Gastrocnemius medialis (tissue), 4 donors: ENCODE measurements at regions of chr21 and their contacts with region 1.

Region 1: DNA sequence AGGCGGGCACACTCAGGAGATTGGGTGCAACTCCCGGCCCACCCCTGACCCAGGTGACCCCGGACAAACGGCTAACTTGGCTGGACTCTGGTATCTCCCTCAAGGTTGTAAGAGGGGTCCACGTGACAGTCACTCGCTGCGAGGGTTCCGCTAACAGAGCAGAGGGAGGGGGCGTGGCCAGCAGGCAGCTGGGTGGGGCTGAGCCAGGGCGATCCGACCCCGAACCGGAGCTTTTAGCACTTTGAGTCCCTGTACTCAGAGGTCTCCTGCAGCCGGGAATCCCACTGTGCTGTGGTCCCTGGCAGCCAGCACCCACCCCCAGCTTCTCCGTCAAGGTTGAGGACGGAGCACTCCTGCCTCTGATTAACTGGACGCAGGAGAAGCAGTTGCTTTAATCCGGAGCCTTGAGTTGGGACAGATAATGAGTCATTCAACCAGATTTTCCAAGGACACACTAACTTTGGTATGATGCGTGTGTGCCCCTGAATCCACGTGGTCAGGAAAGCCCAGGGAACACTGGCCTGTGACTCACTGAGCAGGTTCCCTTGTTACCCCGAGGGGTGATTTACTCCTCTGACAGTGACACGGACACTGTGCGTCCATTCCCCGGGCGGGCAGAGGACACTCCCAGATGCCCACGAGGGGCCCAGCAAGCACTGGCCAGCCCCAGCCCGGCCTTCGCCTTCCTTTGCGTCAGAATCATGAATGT is 16.8 kb downstream of the TRPM2 start:
- DNase-seq: no peak
- ATAC-seq: no peak
- H3K4me3 ChIP-seq: no peak overlapping the region
- H3K27ac ChIP-seq: no peak overlapping the region
- H3K4me1 ChIP-seq: no peaks in the 10 kb centered on the region
- H3K27me3 ChIP-seq: peaks cover 17 to 25% (median 21%) of the 10 kb centered on the region in 3 donors
- CTCF ChIP-seq: no peak
- POLR2A ChIP-seq: no peak

Region 2: DNA sequence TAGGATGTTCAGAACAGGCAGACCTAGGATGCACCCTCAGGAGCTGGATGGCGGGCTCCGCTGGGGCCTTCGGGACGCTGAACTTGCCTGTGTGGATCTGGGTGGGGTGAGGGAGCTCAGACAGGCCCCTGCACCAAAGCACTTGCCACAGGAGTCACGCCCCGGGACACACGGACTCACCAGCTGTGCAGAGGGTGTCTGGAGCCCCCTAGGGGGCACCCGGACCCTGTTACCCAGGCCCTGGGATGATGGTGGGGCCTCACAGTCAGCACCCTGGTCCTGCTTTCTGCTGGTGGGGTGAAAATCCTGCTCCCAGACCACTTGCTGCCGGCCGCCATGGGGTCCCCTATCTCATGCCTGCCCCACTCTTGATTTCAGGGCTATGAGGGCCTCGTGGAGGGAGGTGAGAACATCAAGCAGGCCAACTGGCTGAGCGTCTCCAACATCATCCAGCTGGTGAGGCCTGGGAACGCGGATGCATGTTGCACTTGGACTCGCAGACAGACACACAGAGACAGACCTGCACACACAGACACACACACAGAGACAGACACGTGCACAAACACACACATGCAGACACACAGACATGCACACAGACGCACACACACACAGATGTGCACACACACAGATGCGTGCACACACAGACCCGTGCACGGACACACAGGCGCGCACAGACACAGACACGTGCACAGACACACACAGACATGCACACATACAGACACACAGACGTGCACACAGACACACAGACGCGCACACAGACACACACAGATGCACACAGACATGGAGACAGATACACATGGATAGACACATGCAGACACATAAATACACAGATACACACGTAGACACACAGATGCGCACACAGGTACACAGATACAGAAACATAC is 59.3 kb before region 1 on chr21:
- in situ Hi-C with region 1: no loop called
- intact Hi-C with region 1: loop called (anchors 10 kb)
- DNase-seq: no peak
- ATAC-seq: no peak
- H3K4me3 ChIP-seq: no peak overlapping the region
- H3K27ac ChIP-seq: no peak overlapping the region
- H3K4me1 ChIP-seq: no peaks in the 10 kb centered on the region
- H3K27me3 ChIP-seq: no peaks in the 10 kb centered on the region
- CTCF ChIP-seq: no peak
- POLR2A ChIP-seq: no peak

Region 3: DNA sequence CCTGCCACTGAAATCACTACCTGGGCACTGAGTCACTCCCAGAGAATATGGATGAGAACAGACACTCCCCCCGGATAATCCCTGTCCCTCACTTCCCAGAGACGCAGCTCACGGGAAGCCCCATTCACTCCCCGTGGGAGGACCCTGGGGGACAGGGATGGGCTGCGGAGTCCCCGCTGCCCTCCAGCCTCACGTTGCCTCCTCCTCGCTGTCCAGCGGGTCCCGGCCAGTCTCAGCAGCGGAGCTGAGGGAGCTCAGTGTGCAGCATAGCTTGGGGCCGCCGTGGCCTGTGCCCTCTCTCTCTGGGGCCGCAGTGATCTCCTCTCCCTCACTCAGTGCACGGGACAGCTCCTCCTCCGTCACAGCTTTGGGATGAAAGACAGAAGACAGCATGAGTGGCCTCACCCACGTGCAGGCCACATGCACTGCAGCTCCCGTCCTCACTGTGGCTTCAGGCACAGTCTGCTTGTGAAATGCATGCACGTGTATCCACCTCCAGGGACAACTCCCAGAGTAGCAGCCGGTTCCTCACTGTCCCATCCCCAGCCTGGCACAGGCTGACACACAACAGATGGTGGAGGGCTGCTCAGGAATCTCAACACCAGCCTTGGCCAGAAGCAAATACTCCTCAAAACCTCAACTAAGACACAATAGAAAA is 38.4 kb before region 1 on chr21:
- in situ Hi-C with region 1: no loop called
- intact Hi-C with region 1: no loop called
- DNase-seq: no peak
- ATAC-seq: no peak
- H3K4me3 ChIP-seq: no peak overlapping the region
- H3K27ac ChIP-seq: no peak overlapping the region
- H3K4me1 ChIP-seq: no peaks in the 10 kb centered on the region
- H3K27me3 ChIP-seq: no peaks in the 10 kb centered on the region
- CTCF ChIP-seq: no peak
- POLR2A ChIP-seq: no peak

Region 4: GRCh38 chr21:44752634-44753291 is 382.6 kb after region 1 on chr21:
- in situ Hi-C with region 1: no loop called
- intact Hi-C with region 1: no loop called
- DNase-seq: no peak
- ATAC-seq: no peak
- H3K4me3 ChIP-seq: no peak overlapping the region
- H3K27ac ChIP-seq: no peak overlapping the region
- H3K4me1 ChIP-seq: no peaks in the 10 kb centered on the region
- H3K27me3 ChIP-seq: peaks cover 0 to 14% (median 7%) of the 10 kb centered on the region in 3 donors
- CTCF ChIP-seq: no peak
- POLR2A ChIP-seq: no peak